ENCODE measurements at regions of chr2 and their contacts with region 1.

Region 1: DNA sequence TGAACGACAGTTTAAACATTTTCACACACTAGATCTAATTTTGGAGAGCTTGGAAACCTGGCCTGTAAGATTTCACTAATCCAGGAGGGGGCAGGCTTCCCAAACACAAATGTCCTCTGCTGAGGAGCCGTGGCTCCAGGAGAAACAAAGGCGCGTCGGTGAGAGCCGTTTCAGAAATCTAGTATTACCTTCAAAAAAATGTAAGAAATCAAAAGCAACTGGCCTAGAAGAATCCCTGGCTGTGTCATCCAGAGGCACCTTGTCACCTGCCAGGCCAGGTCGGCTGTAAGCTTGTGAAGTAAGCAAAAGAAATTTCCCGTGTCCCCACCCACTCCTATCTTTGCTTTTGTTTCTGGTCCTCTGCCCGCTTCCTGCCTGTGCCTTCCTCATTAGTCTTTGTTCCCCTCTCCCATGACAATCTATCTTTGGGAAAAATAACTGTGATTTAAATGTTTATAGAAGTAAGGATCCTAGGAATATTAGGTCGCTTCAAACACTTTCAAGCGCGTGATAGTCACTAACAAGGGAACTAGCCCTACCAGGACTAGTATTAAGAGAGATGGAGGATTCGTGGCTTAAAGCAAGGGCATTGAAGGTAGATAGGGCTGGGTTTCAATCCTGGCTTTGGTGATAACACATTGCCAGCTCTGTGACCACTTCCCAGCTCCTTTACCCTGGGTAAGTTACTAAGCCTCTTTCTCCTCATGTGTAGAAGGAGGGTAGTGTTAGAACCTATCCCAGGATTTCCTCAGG is 99.5 kb upstream of the STK39 start:
- DNase-seq: peak; percentile 69 to 84 (median 72)
- ATAC-seq: peak; percentile 91
- H3K4me3 ChIP-seq: peak overlapping the region; percentile 34
- H3K27ac ChIP-seq: no peak overlapping the region
- H3K4me1 ChIP-seq: no peaks in the 10 kb centered on the region; a peak in 1 of 5 replicates
- H3K27me3 ChIP-seq: 0 out of 5 replicates have a peak, but pooled peaks cover under 1 to 4% of the 10 kb centered on the region in 2 experiments
- CTCF ChIP-seq: peak; percentile 78 to 88 (median 83)
- EP300 ChIP-seq: 0 out of 2 replicates have a peak, but pooled peaks have one; percentile 13
- POLR2A ChIP-seq: no peak
- RAD21 ChIP-seq: peak; percentile 96 to 98

Region 2: DNA sequence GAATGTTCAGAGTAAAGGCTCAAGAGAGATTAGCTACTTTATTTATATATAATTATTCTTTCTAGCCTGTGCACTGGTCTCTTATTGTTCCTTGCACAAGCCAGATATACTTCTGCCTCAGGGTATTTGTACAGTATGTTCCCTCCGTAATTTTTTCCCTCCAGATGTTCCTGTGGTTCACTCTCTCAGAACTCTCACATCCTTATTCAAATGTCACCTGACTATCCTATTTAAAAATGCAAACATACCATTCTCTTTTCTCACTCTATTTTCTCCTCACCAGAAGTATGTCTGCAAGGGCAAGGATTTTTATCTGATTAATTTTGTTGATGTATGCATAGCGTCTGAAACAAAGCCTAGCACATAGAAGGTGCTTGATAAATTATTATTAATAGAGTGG is 45.1 kb after region 1 on chr2:
- CTCF ChIA-PET with region 1: no interaction called
- POLR2A ChIA-PET with region 1: no interaction called
- in situ Hi-C with region 1: no loop called
- intact Hi-C with region 1: no loop called
- DNase-seq: no peak
- ATAC-seq: no peak
- H3K4me3 ChIP-seq: no peak overlapping the region
- H3K27ac ChIP-seq: no peak overlapping the region
- H3K4me1 ChIP-seq: no peaks in the 10 kb centered on the region
- H3K27me3 ChIP-seq: no peaks in the 10 kb centered on the region
- CTCF ChIP-seq: no peak
- EP300 ChIP-seq: no peak
- POLR2A ChIP-seq: no peak
- RAD21 ChIP-seq: no peak

Region 3: GRCh38 chr2:168490015-168490874 is 143.3 kb after region 1 on chr2:
- CTCF ChIA-PET with region 1: no interaction called
- POLR2A ChIA-PET with region 1: no interaction called
- in situ Hi-C with region 1: no loop called
- intact Hi-C with region 1: loop called (anchors 2 kb)
- DNase-seq: peak in 2 of 4 experiments; percentile 67 to 74
- ATAC-seq: peak; percentile 93
- H3K4me3 ChIP-seq: peak overlapping the region; percentile 17
- H3K27ac ChIP-seq: peak overlapping the region; percentile 76
- H3K4me1 ChIP-seq: peaks cover 0 to 17% of the 10 kb centered on the region in 2 experiments; a peak in 3 of 5 replicates
- H3K27me3 ChIP-seq: no peaks in the 10 kb centered on the region
- CTCF ChIP-seq: no peak
- EP300 ChIP-seq: peak; percentile 32; the same call in 1 of the 2 replicates
- POLR2A ChIP-seq: peak; percentile 48; the same call in 1 of the 2 replicates
- RAD21 ChIP-seq: no peak

Region 4: DNA sequence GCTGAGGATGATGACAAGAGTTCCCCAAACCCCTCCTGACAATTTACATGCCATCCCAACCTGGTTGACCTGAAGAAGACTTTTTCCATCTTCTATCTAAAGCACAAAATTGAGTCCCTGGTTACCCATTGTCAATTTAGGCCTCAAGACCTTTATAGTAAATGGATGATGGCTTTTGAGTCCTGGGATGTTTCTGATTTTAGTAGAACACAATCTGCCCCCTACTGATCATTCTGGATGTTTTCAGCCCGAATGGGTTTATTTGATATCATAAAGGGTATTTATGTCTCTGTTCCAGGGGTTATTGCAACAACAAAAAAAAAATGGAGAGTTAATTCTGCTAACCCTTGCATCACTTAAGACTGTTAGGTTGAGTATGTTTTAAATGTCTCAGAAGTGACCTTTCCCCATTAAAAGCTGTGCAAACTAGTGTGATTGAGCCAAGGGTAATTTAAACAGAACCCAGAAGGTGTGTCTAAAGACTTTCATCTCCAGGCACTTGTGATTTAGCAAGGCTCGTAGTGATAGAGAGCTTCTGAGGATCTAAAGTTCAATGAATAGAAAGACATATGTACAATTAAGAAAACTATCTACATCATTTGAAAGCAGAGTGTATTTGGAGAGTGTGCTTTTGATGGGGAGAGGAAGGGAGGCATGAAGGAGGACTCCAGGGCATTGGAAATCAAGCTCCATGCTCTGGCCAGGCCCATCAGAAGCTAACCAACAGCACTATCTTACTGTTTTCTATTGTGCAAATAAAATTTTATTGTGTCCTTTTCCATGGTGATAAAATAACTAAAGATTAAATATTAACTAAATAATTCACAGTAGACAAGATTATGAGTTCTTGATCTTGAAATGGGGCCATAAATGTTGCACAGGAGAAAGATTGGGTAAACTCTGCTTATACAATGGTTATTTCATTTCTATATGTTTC is 358.9 kb after region 1 on chr2:
- CTCF ChIA-PET with region 1: interaction called, 4 read pairs
- POLR2A ChIA-PET with region 1: no interaction called
- in situ Hi-C with region 1: loop called (anchors 5 kb)
- intact Hi-C with region 1: loop called (anchors 1 kb)
- DNase-seq: peak in 2 of 4 experiments; percentile 22 to 38
- ATAC-seq: peak; percentile 77
- H3K4me3 ChIP-seq: no peak overlapping the region
- H3K27ac ChIP-seq: no peak overlapping the region
- H3K4me1 ChIP-seq: no peaks in the 10 kb centered on the region; a peak in 1 of 5 replicates
- H3K27me3 ChIP-seq: no peaks in the 10 kb centered on the region
- CTCF ChIP-seq: peak; percentile 25 to 70 (median 46); a peak in 4 of 6 replicates
- EP300 ChIP-seq: no peak
- POLR2A ChIP-seq: no peak
- RAD21 ChIP-seq: peak; percentile 81 to 84

Region 5: DNA sequence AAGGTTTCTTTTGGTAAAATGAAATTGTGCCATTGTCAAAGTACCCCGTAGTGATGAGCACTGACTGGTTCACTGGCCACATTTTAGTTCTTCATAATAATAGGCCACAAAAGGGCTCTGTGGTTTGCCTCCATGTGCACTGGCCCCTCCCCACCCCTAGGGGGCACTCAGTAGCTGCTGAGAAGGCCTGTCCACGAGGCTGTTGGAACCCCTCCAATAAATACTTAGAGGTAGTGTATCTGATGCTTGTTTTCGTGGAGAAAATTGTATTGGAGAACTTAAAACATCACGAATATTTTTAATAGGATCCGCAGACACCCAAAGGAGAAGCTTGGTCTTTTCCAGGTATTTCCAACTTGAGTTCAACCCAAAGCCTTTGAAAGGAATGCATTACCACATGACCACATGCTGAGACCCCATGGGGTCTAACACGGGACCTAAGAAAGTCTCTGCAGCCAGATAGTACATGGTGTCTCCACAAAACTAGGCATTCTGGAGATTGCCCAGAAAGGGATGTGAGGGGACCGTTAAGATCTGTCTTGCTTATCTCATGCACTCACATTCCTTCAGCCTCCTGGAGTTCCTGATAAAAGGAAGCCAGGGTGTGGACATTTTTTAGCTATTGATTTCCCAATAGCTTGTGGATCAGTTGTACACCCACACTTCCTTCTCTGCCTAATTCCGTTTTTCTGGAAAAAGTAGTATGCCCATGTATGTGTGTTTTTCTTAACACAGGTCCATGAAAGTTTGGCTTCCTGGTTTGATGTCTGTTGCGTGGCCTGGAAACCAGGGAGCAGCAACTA is 427.0 kb after region 1 on chr2:
- CTCF ChIA-PET with region 1: interaction called, 6 read pairs
- POLR2A ChIA-PET with region 1: no interaction called
- in situ Hi-C with region 1: no loop called
- intact Hi-C with region 1: loop called (anchors 5 kb)
- DNase-seq: peak; percentile 84 to 97 (median 90)
- ATAC-seq: peak; percentile 95
- H3K4me3 ChIP-seq: peak overlapping the region; percentile 10; the same call in 1 of the 2 replicates
- H3K27ac ChIP-seq: peak overlapping the region; percentile 89
- H3K4me1 ChIP-seq: peaks cover 2 to 48% of the 10 kb centered on the region in 2 experiments; a peak in 4 of 5 replicates
- H3K27me3 ChIP-seq: no peaks in the 10 kb centered on the region
- CTCF ChIP-seq: peak; percentile 91 to 100 (median 99)
- EP300 ChIP-seq: peak; percentile 100
- POLR2A ChIP-seq: no peak
- RAD21 ChIP-seq: peak; percentile 97 to 99

Region 6: DNA sequence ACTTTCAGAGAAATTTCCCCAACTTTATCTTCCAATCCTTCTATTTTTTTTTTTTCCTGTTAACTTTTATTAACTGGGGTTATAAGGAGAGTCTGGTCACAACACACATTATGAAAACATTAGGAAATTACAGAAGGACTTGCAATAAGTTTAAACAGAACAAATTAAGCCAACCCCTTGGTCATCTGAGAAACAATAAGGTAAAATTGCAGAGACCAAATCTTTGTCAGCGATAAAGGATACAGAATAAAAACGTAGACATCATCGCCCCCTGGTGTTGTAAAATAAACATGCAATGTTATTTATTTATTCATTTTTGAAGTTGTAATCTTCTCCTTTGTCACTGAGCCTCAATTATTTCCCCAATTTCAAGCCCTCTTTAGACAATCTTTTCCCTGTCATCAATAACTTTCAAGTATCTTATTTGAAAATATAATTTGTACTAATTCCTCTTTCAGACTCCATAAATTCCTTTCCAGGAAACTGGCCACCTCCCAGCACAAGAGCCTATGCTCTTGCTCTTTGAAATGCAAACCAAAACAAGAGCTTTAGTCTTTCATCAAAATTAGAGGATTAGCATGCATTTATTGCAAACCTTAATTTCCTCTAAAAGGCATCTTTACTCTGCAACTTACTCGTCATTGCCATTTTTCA is 573.7 kb after region 1 on chr2:
- CTCF ChIA-PET with region 1: interaction called, 33 read pairs
- POLR2A ChIA-PET with region 1: no interaction called
- in situ Hi-C with region 1: loop called (anchors 5 kb)
- intact Hi-C with region 1: loop called (anchors 1 kb)
- DNase-seq: peak; percentile 38 to 79 (median 44)
- ATAC-seq: peak; percentile 84
- H3K4me3 ChIP-seq: no peak overlapping the region
- H3K27ac ChIP-seq: no peak overlapping the region
- H3K4me1 ChIP-seq: peaks cover 0 to 7% of the 10 kb centered on the region in 2 experiments; a peak in 1 of 5 replicates
- H3K27me3 ChIP-seq: no peaks in the 10 kb centered on the region
- CTCF ChIP-seq: peak; percentile 63 to 90 (median 67); a peak in 5 of 6 replicates
- EP300 ChIP-seq: no peak
- POLR2A ChIP-seq: no peak
- RAD21 ChIP-seq: peak; percentile 95 to 98

Region 7: DNA sequence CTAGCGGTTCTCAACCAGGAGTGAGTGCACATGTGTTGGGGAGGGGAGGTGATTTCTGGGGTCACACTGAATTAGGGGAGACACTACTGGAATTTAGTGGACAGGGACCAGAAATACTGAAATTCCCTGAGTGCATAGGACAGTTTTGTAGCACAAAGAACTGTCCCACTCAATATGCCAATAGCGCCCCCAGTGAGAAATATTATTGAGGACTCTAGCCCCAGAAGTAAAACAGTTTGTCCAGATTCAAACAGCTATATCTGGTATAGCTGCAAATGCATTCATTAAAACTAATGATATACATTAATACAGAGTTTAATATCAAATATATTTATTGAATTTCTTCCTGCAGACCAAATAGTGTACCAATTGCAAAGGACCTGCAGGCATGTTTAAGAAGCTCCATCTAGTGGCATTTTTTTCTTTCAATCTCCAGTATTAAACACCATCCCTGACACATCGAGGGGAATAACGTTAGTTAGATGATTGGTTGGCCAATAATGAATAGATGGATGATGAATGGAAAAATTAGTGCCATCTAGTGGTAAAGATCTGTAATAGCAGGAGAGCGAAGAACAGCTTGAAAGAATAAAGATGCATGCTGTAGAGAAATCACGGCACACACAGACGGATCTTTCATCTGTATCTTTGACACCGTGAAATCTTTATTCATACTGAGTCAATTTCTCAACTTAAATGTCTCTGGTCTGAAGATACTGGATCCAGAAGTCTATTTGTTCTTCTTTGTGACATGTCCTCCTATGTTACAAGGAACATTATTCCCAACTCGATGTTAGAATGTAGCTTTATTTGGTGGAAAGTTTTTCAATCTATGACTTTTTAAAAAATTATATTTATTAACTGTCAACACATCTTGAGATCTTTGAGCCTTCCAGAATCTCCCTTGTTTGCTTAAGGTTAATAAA is 784.9 kb after region 1 on chr2:
- CTCF ChIA-PET with region 1: no interaction called
- POLR2A ChIA-PET with region 1: no interaction called
- in situ Hi-C with region 1: no loop called
- intact Hi-C with region 1: loop called (anchors 10 kb)
- DNase-seq: peak; percentile 58 to 76 (median 70)
- ATAC-seq: peak; percentile 14; the same call in 2 of the 3 replicates
- H3K4me3 ChIP-seq: no peak overlapping the region
- H3K27ac ChIP-seq: no peak overlapping the region
- H3K4me1 ChIP-seq: peaks cover 13 to 41% of the 10 kb centered on the region in 2 experiments
- H3K27me3 ChIP-seq: no peaks in the 10 kb centered on the region
- CTCF ChIP-seq: peak; percentile 51 to 83 (median 76); a peak in 5 of 6 replicates
- EP300 ChIP-seq: no peak
- POLR2A ChIP-seq: no peak
- RAD21 ChIP-seq: peak; percentile 59 to 66

Measured in K562 (cell line).